ENCODE measurements at regions of chr16 and their contacts with region 1.

Region 1: DNA sequence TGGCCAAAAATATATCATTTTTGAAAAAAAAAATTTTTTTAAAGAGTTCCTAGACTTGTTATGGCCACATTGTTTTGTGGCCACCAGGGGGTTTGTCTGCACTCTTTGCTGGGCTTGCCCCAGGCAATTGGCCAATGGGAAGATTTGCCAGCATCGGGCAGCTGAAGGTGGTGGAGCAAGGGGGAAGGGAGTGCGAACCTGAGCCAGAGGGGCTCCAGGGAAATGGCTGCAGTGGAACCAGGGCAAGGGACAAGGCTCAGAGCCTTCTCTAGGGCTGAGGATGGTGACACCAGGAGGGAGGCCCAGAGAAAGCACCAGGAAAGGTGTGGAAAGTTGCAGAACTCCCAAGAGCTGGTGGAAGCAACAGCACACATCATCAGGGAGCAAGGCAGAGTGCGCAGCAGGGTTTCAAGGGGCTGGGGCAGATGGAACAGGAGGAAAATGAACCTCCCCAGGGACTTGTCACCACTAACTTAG is 15.5 kb upstream of the CMIP start:
- DNase-seq: peak; percentile 53
- ATAC-seq: peak; percentile 37
- H3K4me3 ChIP-seq: no peak overlapping the region
- H3K4me3 Mint-ChIP-seq: no peak overlapping the region
- H3K27ac ChIP-seq: no peak overlapping the region
- H3K27ac Mint-ChIP-seq: peak overlapping the region; percentile 48
- H3K4me1 ChIP-seq: peaks cover 17 to 22% of the 10 kb centered on the region in 2 donors
- H3K4me1 Mint-ChIP-seq: peaks cover 38% of the 10 kb centered on the region
- H3K27me3 ChIP-seq: no peaks in the 10 kb centered on the region
- H3K27me3 Mint-ChIP-seq: no peaks in the 10 kb centered on the region
- CTCF ChIP-seq: peak; percentile 60

Region 2: DNA sequence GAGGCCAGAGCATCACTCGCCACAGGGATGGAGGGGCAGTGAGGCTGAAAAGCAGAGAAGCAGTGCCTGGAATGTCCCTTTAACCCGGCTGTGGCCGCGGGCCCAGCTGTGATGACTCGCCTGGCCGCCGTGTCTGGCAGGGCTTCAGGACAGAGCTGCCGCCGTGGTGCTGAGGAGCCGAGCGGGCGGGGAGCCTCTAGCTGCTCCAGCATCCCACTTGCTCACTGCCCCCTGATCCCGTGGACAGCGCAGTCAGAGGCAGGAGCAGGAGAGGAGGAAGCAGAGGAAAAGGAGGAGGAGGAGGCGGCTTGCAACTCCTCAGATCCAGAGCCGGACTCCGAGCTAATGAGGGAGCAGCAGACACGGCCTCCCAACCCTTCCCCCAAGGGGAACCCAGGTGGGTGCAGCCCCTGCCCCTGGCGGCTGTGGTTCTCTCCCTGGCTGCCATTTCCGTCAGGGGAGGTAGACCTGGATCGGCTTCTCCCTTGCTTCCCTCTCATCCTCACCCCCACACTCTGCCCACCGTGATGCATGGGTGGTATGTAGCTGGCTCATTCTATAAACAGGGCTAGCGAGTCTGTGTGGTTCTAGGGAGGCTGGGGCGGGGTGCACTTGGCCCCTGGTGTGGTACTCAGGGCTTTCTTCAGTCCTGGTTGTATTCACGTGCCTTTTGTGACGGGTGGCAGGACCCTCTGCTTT is 181.2 kb after region 1 on chr16:
- CTCF ChIA-PET with region 1: no interaction called
- POLR2A ChIA-PET with region 1: no interaction called
- intact Hi-C with region 1: loop called (anchors 5 kb)
- DNase-seq: no peak
- ATAC-seq: no peak
- H3K4me3 ChIP-seq: no peak overlapping the region
- H3K4me3 Mint-ChIP-seq: no peak overlapping the region
- H3K27ac ChIP-seq: no peak overlapping the region
- H3K27ac Mint-ChIP-seq: no peak overlapping the region
- H3K4me1 ChIP-seq: peaks cover 13 to 23% of the 10 kb centered on the region in 2 donors
- H3K4me1 Mint-ChIP-seq: peaks cover 35% of the 10 kb centered on the region
- H3K27me3 ChIP-seq: no peaks in the 10 kb centered on the region
- H3K27me3 Mint-ChIP-seq: no peaks in the 10 kb centered on the region
- CTCF ChIP-seq: no peak

Region 3: DNA sequence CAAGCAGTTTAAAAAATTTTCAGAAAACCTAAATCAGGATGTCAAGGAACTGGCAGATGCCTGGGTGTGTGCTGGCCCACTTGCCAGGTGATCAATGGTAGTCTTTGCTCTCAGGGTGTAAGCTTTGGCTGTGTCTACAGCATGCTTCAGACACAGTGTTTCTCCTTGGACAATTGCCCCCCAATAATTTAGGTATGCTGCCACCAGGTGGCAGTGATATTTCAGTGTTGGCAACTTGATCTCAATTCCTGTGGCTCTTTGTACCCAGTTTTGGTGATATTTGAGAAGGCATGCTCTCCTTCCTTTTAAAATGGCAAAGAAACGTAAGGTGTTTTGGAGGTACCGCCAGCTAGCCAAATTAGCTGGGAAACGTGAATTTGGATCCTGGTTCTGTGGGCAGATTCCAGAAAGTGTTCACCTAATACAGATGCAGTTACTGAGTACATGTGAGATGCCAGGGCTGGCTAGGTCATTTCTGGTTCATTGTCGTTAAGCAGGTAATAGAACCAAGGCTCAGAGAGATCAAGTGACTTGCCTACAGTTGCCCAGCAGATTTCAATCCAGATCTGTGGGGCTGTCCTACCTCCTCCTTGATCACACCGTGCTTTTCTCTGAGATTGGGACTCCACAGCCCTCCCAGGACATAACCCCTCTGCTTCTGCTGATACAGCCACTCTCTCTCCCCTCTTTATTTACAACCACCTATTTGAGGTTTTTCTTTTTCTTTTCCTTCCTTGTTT is 194.4 kb after region 1 on chr16:
- CTCF ChIA-PET with region 1: interaction called, 18 read pairs
- POLR2A ChIA-PET with region 1: no interaction called
- intact Hi-C with region 1: no loop called
- DNase-seq: peak; percentile 70
- ATAC-seq: peak; percentile 34
- H3K4me3 ChIP-seq: no peak overlapping the region
- H3K4me3 Mint-ChIP-seq: no peak overlapping the region
- H3K27ac ChIP-seq: no peak overlapping the region
- H3K27ac Mint-ChIP-seq: no peak overlapping the region
- H3K4me1 ChIP-seq: peaks cover 5 to 11% of the 10 kb centered on the region in 2 donors
- H3K4me1 Mint-ChIP-seq: peaks cover 16% of the 10 kb centered on the region
- H3K27me3 ChIP-seq: no peaks in the 10 kb centered on the region
- H3K27me3 Mint-ChIP-seq: no peaks in the 10 kb centered on the region
- CTCF ChIP-seq: peak; percentile 65

Region 4: DNA sequence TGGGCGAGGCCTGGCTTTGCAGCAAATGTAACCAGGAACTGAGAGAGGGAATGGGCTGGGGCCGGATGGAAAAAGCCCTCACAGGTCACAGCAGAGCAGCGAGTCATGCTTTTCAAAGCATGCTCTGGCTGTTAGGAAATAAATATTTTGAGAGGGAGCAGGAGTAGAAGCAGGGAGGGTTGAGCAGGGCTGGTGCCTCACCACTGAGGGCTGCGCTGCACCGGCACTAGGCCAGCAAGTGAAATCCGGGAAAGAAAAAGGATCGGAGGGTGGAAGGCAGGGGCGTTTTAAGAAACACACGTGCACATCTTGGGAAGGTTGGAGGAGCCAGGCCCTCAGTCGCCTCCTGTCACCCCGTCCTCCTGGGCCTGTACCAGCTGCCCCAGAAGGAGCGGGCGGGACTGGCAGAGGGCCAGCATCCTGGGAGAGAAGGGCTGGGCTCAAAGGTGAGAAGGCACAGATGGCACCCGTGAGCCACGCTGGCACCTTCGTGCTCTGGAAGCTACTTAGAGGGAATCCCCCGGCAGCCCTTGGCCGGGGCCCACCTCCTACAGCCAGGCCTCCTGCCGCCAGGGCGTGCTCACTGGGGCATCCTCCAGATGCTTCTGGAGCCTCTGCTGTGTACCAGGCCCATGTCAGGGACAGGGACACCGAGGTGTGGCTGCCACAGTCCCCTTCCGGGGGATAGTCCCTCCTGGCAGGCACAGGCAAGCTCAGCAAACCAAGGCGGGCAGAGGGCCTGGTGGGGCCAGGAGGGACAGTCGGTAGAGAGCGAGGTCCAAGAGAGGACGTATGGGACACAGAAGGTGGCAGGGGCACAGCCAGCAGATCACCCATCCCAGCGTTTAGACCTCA is 278.6 kb after region 1 on chr16:
- CTCF ChIA-PET with region 1: no interaction called
- POLR2A ChIA-PET with region 1: no interaction called
- intact Hi-C with region 1: no loop called
- DNase-seq: no peak
- ATAC-seq: no peak
- H3K4me3 ChIP-seq: no peak overlapping the region
- H3K4me3 Mint-ChIP-seq: no peak overlapping the region
- H3K27ac ChIP-seq: no peak overlapping the region
- H3K27ac Mint-ChIP-seq: no peak overlapping the region
- H3K4me1 ChIP-seq: no peaks in the 10 kb centered on the region
- H3K4me1 Mint-ChIP-seq: no peaks in the 10 kb centered on the region
- H3K27me3 ChIP-seq: no peaks in the 10 kb centered on the region
- H3K27me3 Mint-ChIP-seq: no peaks in the 10 kb centered on the region
- CTCF ChIP-seq: no peak